ENCODE measurements at regions of chr9 and their contacts with region 1.

Region 1: GRCh38 chr9:15135164-15135792 is 171.7 kb downstream of the TTC39B start:
- DNase-seq: peak; percentile 65
- CTCF ChIP-seq: peak; percentile 67

Region 2: DNA sequence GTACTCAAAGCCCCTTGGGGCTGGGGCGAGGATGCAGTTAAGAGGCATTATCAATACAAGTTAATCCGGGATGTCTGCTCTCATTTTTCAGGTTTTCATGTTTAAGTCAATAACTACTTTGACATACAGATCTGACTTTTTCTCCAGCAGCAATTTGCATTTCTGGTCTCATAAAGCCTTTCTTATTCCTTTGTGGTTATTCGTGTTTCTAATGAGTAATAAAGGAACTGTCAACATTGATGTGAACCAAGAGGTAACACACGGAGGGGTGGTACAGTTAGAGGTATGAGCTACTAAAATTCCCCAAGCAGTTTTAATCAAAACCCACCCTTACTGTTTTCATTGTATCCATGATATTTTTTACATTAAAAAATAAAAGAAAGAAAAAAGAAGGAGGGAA is 683.3 kb before region 1 on chr9:
- in situ Hi-C with region 1: loop called (anchors 25 kb)
- DNase-seq: no peak
- CTCF ChIP-seq: no peak

Region 3: GRCh38 chr9:15205632-15206420 is 70.5 kb after region 1 on chr9:
- in situ Hi-C with region 1: no loop called
- DNase-seq: no peak
- CTCF ChIP-seq: no peak

Region 4: GRCh38 chr9:16092142-16093091 is 957.1 kb after region 1 on chr9:
- in situ Hi-C with region 1: no loop called
- DNase-seq: no peak
- CTCF ChIP-seq: no peak